ENCODE measurements at regions of chr18 and their contacts with region 1.

Region 1: DNA sequence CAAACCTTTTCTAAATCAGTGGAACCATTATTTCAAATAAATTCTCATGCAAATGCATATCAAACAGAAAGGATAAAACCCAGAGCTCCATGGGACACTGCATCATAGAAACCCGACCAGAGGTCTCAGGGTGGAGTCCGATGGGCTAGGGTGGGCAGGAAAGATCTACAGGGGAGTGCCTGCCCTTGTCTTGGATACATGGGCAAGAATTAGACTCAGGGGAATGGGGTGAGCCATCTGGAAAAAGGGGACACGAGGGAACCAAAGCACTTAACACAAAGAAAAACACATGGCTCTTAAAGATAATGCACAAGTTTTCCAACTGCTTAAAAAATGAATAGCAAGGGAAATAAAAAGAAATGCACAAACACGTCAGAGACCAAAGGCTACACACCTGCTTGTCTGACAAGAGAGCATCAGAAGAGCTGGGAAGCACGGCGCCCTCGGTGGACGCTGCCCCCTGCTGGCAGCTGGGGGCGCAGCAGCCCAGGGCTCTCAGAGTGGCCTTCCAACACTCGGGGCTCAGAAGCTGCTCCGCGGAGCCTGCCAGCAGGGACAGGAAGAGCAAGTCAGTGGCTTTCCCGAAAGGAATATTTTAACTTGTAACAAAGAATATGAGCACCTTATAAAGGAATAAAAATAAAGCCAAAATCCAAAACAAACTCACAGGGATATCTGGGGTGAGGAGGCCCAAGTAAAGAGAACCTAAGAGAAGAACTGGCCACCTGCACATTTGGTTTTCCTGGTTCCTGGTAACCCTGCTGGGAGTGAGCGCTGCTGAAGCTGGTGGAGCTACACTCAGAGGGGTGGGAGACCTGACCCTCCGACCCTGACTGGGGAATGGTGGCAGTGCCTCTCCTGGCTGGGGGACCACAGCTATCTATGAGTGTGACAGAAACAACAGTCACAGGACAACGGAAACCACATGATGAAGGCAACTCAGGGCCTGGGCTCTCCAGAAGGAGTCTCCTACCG is 54.5 kb downstream of the SIGLEC15 start:
- DNase-seq: peak; percentile 71 to 91
- H3K4me3 ChIP-seq: no peak overlapping the region
- H3K27ac ChIP-seq: no peak overlapping the region
- H3K4me1 ChIP-seq: no peaks in the 10 kb centered on the region
- H3K27me3 ChIP-seq: no peaks in the 10 kb centered on the region
- CTCF ChIP-seq: peak; percentile 97 to 99 (median 99)
- EP300 ChIP-seq: no peak
- POLR2A ChIP-seq: no peak
- RAD21 ChIP-seq: peak; percentile 90 to 93

Region 2: DNA sequence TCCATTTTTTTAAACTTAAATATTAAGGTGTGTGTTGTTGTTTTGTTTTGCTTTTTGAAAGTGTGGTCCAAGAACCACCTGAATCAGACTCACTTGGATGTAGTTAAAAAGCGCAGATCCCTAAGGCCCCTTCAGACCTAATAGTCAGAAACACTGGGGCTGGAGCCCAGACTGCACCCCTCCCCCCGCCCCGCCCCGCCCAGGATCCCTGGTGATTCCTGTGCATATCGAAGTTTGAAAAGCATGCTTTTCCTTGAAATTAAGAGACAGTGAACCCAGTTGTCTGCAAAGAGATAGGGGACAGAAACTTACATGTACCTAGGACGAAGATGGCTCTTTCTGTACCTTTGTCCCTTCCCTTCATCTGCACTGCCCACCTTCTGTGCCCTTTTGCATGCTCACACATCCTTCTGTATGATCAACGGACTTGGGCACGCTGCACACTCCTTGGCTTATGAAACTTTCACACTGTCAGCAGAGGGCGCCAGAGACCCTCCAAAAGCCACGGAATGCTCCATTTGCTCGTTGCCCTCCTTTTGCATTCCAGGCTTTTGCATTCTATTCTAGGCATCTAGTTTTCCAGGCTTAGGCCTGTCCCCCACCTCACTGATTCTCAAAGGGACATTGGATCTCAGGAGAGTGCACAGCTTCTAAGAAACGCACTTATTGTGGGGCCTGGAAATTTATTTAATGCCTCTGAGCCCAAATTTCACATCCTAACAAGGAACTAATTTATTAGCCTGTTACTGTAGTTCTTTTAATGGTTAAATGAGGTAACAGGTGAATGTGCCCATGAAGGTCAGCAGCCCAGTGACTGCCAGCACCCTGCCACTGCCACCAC is 188.8 kb before region 1 on chr18:
- CTCF ChIA-PET with region 1: interaction called, 58 read pairs
- POLR2A ChIA-PET with region 1: no interaction called
- DNase-seq: peak; percentile 46 to 90
- H3K4me3 ChIP-seq: no peak overlapping the region
- H3K27ac ChIP-seq: no peak overlapping the region
- H3K4me1 ChIP-seq: peaks cover 5 to 9% (median 7%) of the 10 kb centered on the region in 4 experiments
- H3K27me3 ChIP-seq: no peaks in the 10 kb centered on the region
- CTCF ChIP-seq: peak; percentile 81 to 96 (median 93)
- EP300 ChIP-seq: no peak
- POLR2A ChIP-seq: no peak
- RAD21 ChIP-seq: peak; percentile 98 to 99

Region 3: DNA sequence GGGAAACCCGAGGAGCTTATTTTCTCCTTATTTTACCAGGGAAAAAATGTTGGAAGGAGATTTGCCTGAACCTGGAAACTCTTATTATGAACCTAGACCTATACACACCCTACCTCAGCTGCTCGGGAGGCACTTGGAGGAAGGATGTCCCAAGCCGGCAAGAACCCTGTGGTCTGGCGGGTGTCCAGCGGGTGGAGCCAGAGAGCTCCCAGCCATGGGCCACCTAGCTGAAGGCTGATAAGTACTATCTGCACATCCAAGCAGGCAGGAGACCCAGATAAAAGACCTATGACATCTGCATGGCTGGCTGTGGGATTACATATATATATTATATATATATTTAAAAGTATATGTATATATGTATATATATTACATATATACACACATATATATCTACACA is 157.1 kb before region 1 on chr18:
- CTCF ChIA-PET with region 1: interaction called, 69 read pairs
- POLR2A ChIA-PET with region 1: no interaction called
- DNase-seq: peak; percentile 56 to 95
- H3K4me3 ChIP-seq: no peak overlapping the region
- H3K27ac ChIP-seq: no peak overlapping the region
- H3K4me1 ChIP-seq: peaks cover 0 to 4% (median 0%) of the 10 kb centered on the region in 4 experiments; a peak in 1 of 7 replicates
- H3K27me3 ChIP-seq: no peaks in the 10 kb centered on the region
- CTCF ChIP-seq: peak; percentile 88 to 98 (median 91)
- EP300 ChIP-seq: no peak
- POLR2A ChIP-seq: no peak
- RAD21 ChIP-seq: peak; percentile 90 to 96

Region 4: GRCh38 chr18:45738658-45739057 is 141.3 kb before region 1 on chr18:
- CTCF ChIA-PET with region 1: no interaction called
- POLR2A ChIA-PET with region 1: no interaction called
- DNase-seq: no peak
- H3K4me3 ChIP-seq: no peak overlapping the region
- H3K27ac ChIP-seq: no peak overlapping the region
- H3K4me1 ChIP-seq: peaks cover 4 to 13% (median 9%) of the 10 kb centered on the region in 4 experiments
- H3K27me3 ChIP-seq: no peaks in the 10 kb centered on the region
- CTCF ChIP-seq: peak; percentile 37 to 53 (median 50)
- EP300 ChIP-seq: no peak
- POLR2A ChIP-seq: no peak
- RAD21 ChIP-seq: peak; percentile 46 to 62

Region 5: DNA sequence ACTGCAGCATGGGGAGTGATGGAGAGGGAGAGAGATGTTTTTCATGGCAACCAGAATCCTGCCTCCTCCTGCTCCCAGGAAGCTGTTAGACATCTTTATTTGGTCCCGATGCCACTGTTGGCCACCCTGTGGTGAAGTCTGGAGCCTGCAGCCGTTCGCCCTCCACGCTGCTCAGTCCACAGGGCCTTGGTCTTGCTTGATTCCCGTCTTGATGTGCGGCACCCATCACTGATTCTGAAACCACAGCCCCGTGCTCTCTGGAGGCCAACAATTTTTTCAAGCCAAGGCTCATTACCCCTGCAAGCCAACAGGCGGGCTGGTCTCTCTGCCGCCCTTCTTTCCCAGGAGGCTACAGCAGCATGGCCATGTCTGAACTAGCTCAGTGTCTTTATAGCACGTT is 29.9 kb before region 1 on chr18:
- CTCF ChIA-PET with region 1: interaction called, 17 read pairs
- POLR2A ChIA-PET with region 1: no interaction called
- DNase-seq: peak in 1 of 2 experiments; percentile 56
- H3K4me3 ChIP-seq: no peak overlapping the region
- H3K27ac ChIP-seq: no peak overlapping the region
- H3K4me1 ChIP-seq: no peaks in the 10 kb centered on the region
- H3K27me3 ChIP-seq: no peaks in the 10 kb centered on the region
- CTCF ChIP-seq: peak; percentile 61 to 76 (median 75)
- EP300 ChIP-seq: no peak
- POLR2A ChIP-seq: no peak
- RAD21 ChIP-seq: peak; percentile 63 to 67

Region 6: DNA sequence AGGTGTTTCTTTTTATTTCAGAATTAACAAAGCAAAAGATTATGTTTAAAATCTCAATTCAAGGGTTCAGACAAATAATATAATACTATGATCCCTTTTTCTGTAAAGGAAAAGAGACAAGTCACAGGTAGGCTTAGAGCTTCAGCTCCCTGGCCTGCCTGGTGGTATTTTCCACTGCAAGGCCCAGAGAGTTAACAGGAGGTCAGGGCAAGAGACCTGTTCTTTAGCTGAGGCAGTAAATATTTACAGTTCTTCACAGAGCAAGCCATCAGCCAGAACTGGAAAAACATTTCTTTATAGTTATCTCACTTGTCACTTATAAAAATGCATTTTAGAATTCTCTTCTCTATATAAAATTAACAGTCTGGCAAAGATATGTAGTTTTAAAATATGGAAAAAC is 17.0 kb after region 1 on chr18:
- CTCF ChIA-PET with region 1: interaction called, 26 read pairs
- POLR2A ChIA-PET with region 1: no interaction called
- DNase-seq: no peak
- H3K4me3 ChIP-seq: no peak overlapping the region
- H3K27ac ChIP-seq: no peak overlapping the region
- H3K4me1 ChIP-seq: no peaks in the 10 kb centered on the region
- H3K27me3 ChIP-seq: no peaks in the 10 kb centered on the region
- CTCF ChIP-seq: no peak
- EP300 ChIP-seq: no peak
- POLR2A ChIP-seq: no peak
- RAD21 ChIP-seq: no peak

Region 7: DNA sequence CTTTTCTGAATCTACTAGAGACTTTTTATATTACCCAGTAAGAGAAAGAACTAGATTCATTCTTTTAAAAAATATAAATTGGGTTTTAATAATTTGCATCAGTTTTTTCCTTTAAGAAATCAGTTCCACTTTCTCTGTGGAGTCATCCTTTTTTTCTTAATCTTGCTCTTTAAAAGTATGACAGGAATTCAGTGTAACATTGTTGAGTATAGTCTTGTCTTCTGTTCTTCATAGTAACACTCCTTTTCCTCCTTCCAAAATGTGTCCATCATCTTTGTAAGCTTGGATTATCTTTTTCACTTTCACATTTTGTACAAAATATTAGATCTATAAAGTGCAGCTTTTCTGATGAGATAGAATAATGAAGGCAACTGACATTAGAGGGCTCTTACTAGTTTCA is 359.6 kb after region 1 on chr18:
- CTCF ChIA-PET with region 1: no interaction called
- POLR2A ChIA-PET with region 1: no interaction called
- DNase-seq: no peak
- H3K4me3 ChIP-seq: no peak overlapping the region
- H3K27ac ChIP-seq: no peak overlapping the region
- H3K4me1 ChIP-seq: peaks cover 0 to 4% (median 2%) of the 10 kb centered on the region in 4 experiments; a peak in 2 of 7 replicates
- H3K27me3 ChIP-seq: no peaks in the 10 kb centered on the region
- CTCF ChIP-seq: no peak
- EP300 ChIP-seq: no peak
- POLR2A ChIP-seq: no peak
- RAD21 ChIP-seq: no peak

Measured in H1 (cell line).